ENCODE measurements at regions of chr14 and their contacts with region 1.

Region 1: GRCh38 chr14:97620066-97620465 is 822.9 kb downstream of the VRK1 start:
- DNase-seq: no peak
- ATAC-seq: no peak
- H3K4me3 Mint-ChIP-seq: peak overlapping the region; percentile 67
- H3K27ac Mint-ChIP-seq: peak overlapping the region; percentile 93
- H3K4me1 Mint-ChIP-seq: peaks cover 45% of the 10 kb centered on the region
- H3K27me3 Mint-ChIP-seq: no peaks in the 10 kb centered on the region

Region 2: DNA sequence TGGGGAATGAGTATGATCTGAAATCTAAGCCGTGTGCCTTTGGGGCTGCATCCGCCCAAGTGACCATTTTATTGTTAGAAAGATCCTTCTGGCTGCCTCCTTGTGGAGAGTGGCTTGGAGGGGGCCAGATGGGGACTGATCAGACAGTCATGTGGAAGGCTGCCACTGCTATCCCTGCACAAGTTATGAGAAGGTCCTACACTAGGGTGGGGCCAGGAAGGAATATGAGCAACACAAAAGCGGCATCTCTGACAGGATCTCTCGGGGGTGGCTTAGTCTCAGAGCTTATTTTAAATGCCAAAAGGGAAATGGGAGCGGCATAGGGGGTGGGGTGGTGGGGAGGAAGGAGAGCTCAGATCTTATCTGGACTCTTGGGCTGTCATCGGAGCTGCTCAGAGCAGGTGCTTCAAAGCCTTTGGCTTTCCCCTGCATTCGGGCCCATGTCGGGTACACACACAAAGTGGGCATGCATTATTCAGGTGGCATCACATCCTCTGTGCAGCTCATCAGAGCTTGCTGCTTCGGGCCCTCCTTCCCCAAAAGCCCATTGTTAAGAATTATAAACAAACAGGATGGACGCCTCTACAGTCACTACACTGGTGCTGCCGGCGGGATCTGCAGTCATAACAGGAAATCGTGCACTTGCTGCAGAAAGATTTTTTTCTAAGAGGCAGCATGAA is 17.5 kb before region 1 on chr14:
- CTCF ChIA-PET with region 1: interaction called, 3 read pairs
- POLR2A ChIA-PET with region 1: interaction called, 4 read pairs
- intact Hi-C with region 1: loop called (anchors 2 kb)
- DNase-seq: peak; percentile 77
- ATAC-seq: peak; percentile 85
- H3K4me3 Mint-ChIP-seq: no peak overlapping the region
- H3K27ac Mint-ChIP-seq: no peak overlapping the region
- H3K4me1 Mint-ChIP-seq: peaks cover 11% of the 10 kb centered on the region
- H3K27me3 Mint-ChIP-seq: no peaks in the 10 kb centered on the region

Region 3: DNA sequence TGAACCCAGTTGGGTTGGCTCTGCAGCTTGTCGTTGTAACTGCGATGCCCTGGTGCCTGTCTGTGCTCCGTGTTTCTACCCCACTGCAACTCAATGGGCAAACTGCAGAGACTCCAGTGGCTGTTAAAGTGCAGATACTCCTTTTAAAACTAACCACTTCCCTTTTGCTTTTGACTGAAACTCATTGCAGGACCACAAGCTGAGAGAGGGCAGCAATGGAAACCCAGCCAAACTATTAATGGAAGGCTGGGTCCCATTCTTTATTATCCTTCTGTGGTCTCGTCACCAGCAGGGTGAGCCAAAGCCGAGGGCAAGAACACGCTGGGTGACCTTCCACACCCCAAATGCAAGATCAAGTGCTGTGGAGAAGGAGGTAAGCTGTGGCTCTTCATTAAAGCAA is 87.5 kb after region 1 on chr14:
- CTCF ChIA-PET with region 1: no interaction called
- POLR2A ChIA-PET with region 1: no interaction called
- intact Hi-C with region 1: loop called in 1 of 2 experiments (anchors 5 kb)
- DNase-seq: peak; percentile 39
- ATAC-seq: peak; percentile 32
- H3K4me3 Mint-ChIP-seq: no peak overlapping the region
- H3K27ac Mint-ChIP-seq: no peak overlapping the region
- H3K4me1 Mint-ChIP-seq: peaks cover 96% of the 10 kb centered on the region
- H3K27me3 Mint-ChIP-seq: no peaks in the 10 kb centered on the region

Region 4: DNA sequence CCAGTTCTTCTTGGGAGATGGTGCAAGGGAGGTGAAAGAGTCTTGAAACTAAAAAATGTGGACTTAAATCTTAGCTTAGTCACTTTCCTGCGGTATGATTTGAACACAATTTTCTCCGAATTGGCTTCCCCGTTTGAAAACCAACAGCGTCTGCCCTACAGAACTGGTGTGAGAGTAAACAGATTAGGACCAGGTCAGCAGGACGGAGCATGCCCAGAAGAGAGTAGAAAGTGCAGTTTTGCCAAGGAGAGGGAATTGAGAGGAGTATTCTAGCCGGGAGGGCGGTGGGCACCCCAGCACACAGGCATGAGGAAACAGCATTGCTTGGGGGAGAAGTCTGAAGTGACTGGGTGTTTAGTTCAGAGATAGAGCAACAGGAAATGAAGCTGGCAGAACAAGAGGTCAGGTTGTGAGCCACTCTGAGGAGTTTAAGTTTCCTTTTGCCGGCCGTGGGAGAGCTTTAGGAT is 104.2 kb after region 1 on chr14:
- CTCF ChIA-PET with region 1: no interaction called
- POLR2A ChIA-PET with region 1: no interaction called
- intact Hi-C with region 1: loop called (anchors 5 kb)
- DNase-seq: peak; percentile 63
- ATAC-seq: peak; percentile 93
- H3K4me3 Mint-ChIP-seq: peak overlapping the region; percentile 72
- H3K27ac Mint-ChIP-seq: peak overlapping the region; percentile 98
- H3K4me1 Mint-ChIP-seq: peaks cover 76% of the 10 kb centered on the region
- H3K27me3 Mint-ChIP-seq: no peaks in the 10 kb centered on the region

Measured in activated CD4-positive, alpha-beta T cell treated with anti-CD3 and anti-CD28 coated beads for 36 hours (primary cell).